Activated CD4-positive, alpha-beta T cell treated with anti-CD3 and anti-CD28 coated beads, Interleukin-2, amount 10 ng/mL, durations not matched to agents 7 days and 5 days (primary cell): ENCODE measurements at regions of chr2 and their contacts with region 1.

Region 1: DNA sequence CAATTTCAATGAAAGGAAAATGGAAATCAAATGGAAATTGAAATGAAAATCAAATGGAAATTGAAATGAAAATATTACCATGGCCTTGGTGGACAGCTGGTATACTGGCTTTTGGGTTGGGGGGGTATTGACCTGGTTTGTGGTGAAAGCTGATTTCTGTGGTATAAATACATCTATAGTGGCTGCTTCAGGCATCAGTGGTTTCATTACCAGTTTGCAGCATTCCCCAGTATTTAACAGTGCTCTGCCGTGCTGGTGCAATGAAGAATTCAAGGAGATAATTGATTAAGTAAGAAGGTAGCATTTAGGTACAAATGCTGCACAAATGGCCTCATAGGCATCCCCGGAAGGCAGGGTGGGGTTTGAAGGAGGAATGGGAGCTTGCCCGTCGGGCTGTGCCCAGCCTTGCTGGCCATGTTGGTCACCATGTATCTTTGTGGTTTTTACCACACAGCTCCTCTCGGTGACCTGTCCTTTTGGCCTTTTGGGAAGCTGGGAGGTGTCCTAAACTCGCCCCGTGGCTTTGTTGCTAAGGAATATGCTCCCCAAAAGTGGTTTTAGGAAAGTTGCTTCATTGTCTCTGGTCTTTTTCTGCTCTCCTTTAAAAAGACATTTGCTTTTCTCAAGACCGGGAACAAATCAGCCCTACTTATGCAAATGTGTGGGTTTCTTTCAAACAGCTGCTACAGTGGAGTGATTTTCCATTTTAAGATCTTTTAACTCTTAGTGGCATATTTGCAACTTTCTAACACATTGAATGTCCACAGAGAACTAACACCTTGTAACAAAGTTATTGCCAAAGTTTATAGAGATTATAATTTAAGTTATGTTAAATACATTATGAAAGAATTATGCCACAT is 28.6 kb downstream of the SNTG2 start:
- DNase-seq: no peak
- H3K4me3 Mint-ChIP-seq: no peak overlapping the region
- H3K27ac Mint-ChIP-seq: no peak overlapping the region
- H3K4me1 Mint-ChIP-seq: peaks cover 10% of the 10 kb centered on the region
- H3K27me3 Mint-ChIP-seq: no peaks in the 10 kb centered on the region

Region 2: DNA sequence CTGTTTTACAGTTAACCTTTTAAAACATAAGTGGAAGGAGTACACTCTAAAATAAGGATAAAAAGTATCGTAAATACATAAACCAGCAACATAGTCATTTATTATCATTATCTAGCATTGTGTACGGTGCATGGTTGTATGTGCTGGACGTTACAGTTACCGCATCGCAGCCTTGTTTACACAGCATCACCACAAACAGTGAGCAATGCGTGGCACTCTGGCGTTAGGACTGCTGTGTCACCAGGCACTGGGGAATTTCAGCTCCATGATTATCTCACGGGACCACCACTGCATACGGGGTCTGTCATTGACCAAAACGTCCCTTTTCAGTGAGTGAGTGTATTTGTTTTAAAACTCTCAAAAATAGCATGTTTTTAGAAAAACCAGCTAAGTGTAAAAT is 131.6 kb before region 1 on chr2:
- CTCF ChIA-PET with region 1: no interaction called
- POLR2A ChIA-PET with region 1: interaction called, 10 read pairs
- DNase-seq: no peak
- H3K4me3 Mint-ChIP-seq: no peak overlapping the region
- H3K27ac Mint-ChIP-seq: no peak overlapping the region
- H3K4me1 Mint-ChIP-seq: no peaks in the 10 kb centered on the region
- H3K27me3 Mint-ChIP-seq: peaks cover 3% of the 10 kb centered on the region